ENCODE measurements at regions of chr12 and their contacts with region 1.

Region 1: DNA sequence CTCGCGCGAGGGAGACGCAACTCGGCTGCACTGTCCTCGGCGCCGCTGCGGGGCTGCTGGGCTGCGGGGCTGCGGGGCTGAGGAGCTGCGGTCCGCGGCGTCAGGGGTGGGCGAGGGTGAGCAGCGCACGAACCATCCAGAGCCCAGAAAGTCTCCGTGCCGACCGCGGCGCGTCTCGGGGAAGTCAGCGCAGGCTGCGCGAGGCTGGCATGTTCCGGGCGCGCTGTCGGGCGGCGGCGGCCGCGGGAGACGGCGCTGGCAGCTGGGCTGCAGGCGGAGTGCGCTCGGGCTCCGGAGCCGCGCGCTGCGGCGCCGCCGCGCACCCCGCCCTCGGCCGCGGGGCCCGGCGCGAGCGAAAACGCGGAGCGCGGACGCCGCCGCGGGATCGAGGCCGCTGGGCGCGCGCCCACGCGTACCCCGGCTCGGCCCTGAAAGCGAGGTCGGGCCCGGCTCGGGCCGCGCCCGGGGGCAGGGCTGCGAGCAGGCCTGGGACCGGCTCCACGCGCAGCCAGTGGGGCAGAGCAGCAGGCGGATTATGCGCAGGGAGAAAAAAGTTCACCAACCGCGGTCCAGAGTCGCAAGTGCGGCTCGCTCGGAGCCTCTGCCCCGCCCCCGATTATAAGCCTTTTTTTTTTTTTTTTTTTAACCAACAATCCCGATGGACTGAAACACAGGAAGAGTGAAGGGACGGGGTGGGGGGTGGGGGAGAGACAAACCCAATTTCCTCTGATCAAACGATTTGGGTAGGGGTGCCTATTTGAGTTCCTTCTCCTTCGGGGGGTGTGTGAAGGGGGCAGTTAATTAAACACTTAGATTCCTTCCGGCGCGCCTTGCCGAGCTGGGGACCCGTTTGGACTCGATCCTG is at the start of gene PRICKLE1:
- DNase-seq: peak; percentile 67
- H3K4me3 ChIP-seq: peak within 1 kb of the TSS; percentile 59
- H3K27ac ChIP-seq: no peak within 1 kb of the TSS
- H3K4me1 ChIP-seq: peaks cover 26% of the 10 kb centered on the region
- H3K27me3 ChIP-seq: peaks cover 26% of the 10 kb centered on the region
- CTCF ChIP-seq: no peak
- total RNA-seq, gene PRICKLE1: 0.70 and 1.1 TPM in 2 replicates

Region 2: GRCh38 chr12:42097971-42098370 is 491.7 kb before region 1 on chr12:
- CTCF ChIA-PET with region 1: no interaction called
- POLR2A ChIA-PET with region 1: no interaction called
- intact Hi-C with region 1: no loop called
- DNase-seq: no peak
- H3K4me3 ChIP-seq: no peak overlapping the region
- H3K27ac ChIP-seq: no peak overlapping the region
- H3K4me1 ChIP-seq: no peaks in the 10 kb centered on the region
- H3K27me3 ChIP-seq: no peaks in the 10 kb centered on the region
- CTCF ChIP-seq: no peak

Region 3: DNA sequence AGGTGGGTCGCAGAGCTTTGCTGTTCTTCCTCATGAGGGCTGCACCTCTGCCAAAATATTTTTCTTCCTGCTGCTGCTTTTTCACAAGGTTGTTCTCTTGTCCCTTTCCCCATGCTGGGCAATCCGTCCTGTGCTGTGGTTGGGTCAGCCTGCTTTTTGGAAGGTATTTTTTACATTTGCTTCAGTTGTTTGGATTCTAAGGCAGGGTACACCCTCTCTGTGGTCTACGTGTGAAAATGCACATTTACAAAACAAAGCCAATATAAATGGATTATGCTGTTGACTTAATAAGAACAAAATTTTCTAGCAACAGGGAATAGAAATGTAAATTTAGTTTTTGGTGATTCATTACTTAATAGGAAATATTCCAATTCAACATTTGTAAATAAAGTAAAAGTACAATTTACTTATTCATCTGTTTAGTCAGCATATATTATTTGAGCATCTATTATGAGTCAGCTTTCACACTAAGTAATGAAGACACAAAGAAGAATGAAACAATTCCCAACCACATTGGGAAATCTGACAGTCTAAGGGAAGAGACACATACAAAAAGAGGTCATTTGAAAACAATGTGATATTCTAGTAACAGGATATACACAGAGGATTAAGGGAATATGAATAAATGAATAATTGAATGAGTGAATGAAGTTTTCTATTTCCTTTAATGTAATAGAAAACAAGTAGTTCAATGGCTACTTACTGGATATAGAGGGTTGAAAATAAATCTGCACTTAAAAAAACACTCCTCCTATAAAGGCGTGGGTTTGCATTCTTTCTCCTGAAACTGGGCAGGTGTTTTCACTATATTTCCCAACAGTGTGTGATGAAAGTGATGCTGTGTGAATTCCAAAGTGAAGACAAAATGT is 94.5 kb after region 1 on chr12:
- CTCF ChIA-PET with region 1: no interaction called
- POLR2A ChIA-PET with region 1: no interaction called
- intact Hi-C with region 1: loop called (anchors 10 kb)
- DNase-seq: peak; percentile 34
- H3K4me3 ChIP-seq: no peak overlapping the region
- H3K27ac ChIP-seq: no peak overlapping the region
- H3K4me1 ChIP-seq: no peaks in the 10 kb centered on the region
- H3K27me3 ChIP-seq: no peaks in the 10 kb centered on the region
- CTCF ChIP-seq: no peak

Region 4: GRCh38 chr12:43282106-43282505 is 692.4 kb after region 1 on chr12:
- CTCF ChIA-PET with region 1: no interaction called
- POLR2A ChIA-PET with region 1: no interaction called
- intact Hi-C with region 1: loop called (anchors 5 kb)
- DNase-seq: peak; percentile 9
- H3K4me3 ChIP-seq: no peak overlapping the region
- H3K27ac ChIP-seq: no peak overlapping the region
- H3K4me1 ChIP-seq: no peaks in the 10 kb centered on the region
- H3K27me3 ChIP-seq: no peaks in the 10 kb centered on the region
- CTCF ChIP-seq: peak; percentile 51

Region 5: DNA sequence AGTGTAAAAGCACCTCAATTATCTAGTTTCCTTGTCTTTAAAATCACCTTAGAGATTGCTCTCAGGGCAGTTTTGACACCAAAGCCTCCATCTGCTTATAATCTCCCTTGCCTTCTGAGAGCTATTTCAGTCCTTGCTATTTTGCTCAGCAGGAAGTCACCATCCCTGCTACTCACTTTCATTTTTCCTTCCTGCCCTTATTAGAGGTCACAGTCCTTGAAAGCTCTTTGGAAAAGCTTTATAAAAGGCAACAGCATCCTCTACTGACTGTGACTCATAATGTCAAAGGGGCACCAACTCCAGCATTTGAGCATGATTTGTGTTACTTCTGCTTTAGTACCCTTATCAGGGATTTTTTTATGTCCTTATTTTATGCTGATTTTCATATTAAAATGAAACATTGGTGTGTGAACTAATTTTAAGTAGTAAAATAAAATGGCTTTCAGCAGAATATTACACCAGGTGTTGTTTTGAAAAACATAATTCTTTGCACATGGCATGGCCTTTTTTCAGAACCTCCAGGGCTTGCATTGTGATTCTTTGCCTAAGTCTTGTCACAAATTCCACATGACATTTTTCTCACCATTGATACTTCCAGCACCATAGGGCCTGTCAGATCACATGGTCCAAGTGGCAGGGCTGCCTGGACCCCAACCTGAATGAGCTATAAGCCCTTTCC is 749.3 kb after region 1 on chr12:
- CTCF ChIA-PET with region 1: no interaction called
- POLR2A ChIA-PET with region 1: no interaction called
- intact Hi-C with region 1: loop called (anchors 5 kb)
- DNase-seq: peak; percentile 64
- H3K4me3 ChIP-seq: no peak overlapping the region
- H3K27ac ChIP-seq: no peak overlapping the region
- H3K4me1 ChIP-seq: no peaks in the 10 kb centered on the region
- H3K27me3 ChIP-seq: no peaks in the 10 kb centered on the region
- CTCF ChIP-seq: peak; percentile 40; the same call in 1 of the 2 replicates